Calu3 (cell line): ENCODE measurements at regions of chr16 and their contacts with region 1.

Region 1: GRCh38 chr16:68528686-68529379 is 10.3 kb upstream of the ZFP90 start:
- DNase-seq: peak; percentile 91
- H3K4me3 Mint-ChIP-seq: peak overlapping the region; percentile 99
- H3K27ac Mint-ChIP-seq: peak overlapping the region; percentile 54
- H3K4me1 Mint-ChIP-seq: peaks cover 28% of the 10 kb centered on the region
- H3K27me3 Mint-ChIP-seq: no peaks in the 10 kb centered on the region
- CTCF ChIP-seq: peak; percentile 95

Region 2: GRCh38 chr16:68356249-68356918 is 172.4 kb before region 1 on chr16:
- CTCF ChIA-PET with region 1: no interaction called
- intact Hi-C with region 1: no loop called
- DNase-seq: no peak
- H3K4me3 Mint-ChIP-seq: no peak overlapping the region
- H3K27ac Mint-ChIP-seq: no peak overlapping the region
- H3K4me1 Mint-ChIP-seq: no peaks in the 10 kb centered on the region
- H3K27me3 Mint-ChIP-seq: no peaks in the 10 kb centered on the region
- CTCF ChIP-seq: no peak

Region 3: DNA sequence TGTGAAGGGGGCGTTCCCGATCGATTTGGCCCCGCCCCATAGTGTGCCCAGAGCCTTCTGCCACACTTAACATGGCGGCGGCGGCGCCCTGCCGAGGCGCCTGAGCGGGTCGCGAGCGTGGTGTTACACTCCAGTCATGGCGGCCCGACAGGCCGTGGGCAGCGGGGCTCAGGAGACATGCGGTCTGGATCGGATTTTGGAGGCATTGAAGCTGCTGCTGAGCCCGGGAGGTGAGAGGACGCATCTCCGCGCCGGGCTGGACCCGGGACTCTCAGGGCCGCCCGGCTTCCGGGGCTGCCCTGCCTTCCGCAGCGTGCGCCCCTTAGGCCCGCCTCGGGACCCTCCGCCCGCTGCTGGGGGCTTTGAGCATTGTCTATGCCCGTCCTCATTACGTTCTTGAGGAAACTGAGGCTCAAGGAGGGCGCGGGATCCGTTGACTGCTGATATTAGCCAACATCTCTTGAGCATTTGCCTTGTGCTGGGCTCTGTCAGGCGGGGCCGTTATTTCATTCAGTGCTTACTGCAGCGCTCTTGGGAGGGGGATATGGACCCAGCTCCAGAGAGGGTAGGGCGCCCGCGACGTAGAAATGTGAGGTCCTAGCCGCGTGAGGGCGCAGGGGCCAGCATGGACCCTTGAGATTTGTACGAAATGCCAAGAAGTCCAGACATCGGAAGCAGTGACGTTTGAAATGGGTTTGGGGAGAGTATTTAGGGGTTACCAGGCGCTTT is 314.8 kb after region 1 on chr16 and contains the start of gene TANGO6:
- CTCF ChIA-PET with region 1: interaction called, 4 read pairs
- intact Hi-C with region 1: loop called (anchors 5 kb)
- DNase-seq: peak; percentile 92
- H3K4me3 Mint-ChIP-seq: peak within 1 kb of the TSS; percentile 69
- H3K27ac Mint-ChIP-seq: peak within 1 kb of the TSS; percentile 27
- H3K4me1 Mint-ChIP-seq: peaks cover 8% of the 10 kb centered on the region
- H3K27me3 Mint-ChIP-seq: no peaks in the 10 kb centered on the region
- CTCF ChIP-seq: peak; percentile 21
- total RNA-seq, gene TANGO6: 18.0 TPM in 2 replicates